CD8-positive, alpha-beta T cell (primary cell): ENCODE measurements at regions of chr18 and their contacts with region 1.

Region 1: GRCh38 chr18:1350931-1351450 is 446.3 kb downstream of the ADCYAP1 start:
- DNase-seq: no peak
- ATAC-seq: no peak
- H3K4me3 ChIP-seq: no peak overlapping the region
- H3K4me3 Mint-ChIP-seq: no peak overlapping the region
- H3K27ac ChIP-seq: no peak overlapping the region
- H3K27ac Mint-ChIP-seq: no peak overlapping the region
- H3K4me1 ChIP-seq: no peaks in the 10 kb centered on the region
- H3K4me1 Mint-ChIP-seq: no peaks in the 10 kb centered on the region
- H3K27me3 ChIP-seq: no peaks in the 10 kb centered on the region
- H3K27me3 Mint-ChIP-seq: no peaks in the 10 kb centered on the region
- CTCF ChIP-seq: no peak

Region 2: GRCh38 chr18:1292167-1292566 is 58.8 kb before region 1 on chr18:
- CTCF ChIA-PET with region 1: no interaction called
- POLR2A ChIA-PET with region 1: no interaction called
- intact Hi-C with region 1: loop called in 1 of 2 experiments (anchors 10 kb)
- DNase-seq: no peak
- ATAC-seq: no peak
- H3K4me3 ChIP-seq: no peak overlapping the region
- H3K4me3 Mint-ChIP-seq: no peak overlapping the region
- H3K27ac ChIP-seq: no peak overlapping the region
- H3K27ac Mint-ChIP-seq: no peak overlapping the region
- H3K4me1 ChIP-seq: no peaks in the 10 kb centered on the region
- H3K4me1 Mint-ChIP-seq: no peaks in the 10 kb centered on the region
- H3K27me3 ChIP-seq: no peaks in the 10 kb centered on the region
- H3K27me3 Mint-ChIP-seq: no peaks in the 10 kb centered on the region
- CTCF ChIP-seq: no peak